ENCODE measurements at regions of chr2 and their contacts with region 1.

Region 1: DNA sequence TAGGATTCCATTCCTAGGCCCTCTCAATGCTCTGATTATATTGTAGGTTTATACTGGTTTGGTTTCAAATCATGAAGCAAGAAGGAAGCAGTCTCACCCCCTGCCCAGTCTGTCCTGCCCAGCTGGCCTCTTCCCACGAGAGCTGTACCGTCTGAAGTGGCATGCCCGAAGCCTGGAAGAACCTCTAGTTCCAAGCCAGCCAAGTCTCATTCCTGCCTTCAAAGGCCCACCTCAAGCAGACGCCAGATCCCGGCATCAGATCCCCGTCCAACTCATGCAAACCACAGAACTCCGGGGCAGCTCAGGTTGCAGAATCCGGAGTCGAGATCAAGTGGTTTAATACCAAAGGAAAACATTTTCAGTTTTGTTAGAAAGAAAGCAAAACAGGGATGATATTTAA is 234.4 kb downstream of the LPIN1 start:
- DNase-seq: no peak
- H3K4me3 ChIP-seq: no peak overlapping the region
- H3K27ac ChIP-seq: no peak overlapping the region
- H3K4me1 ChIP-seq: peaks cover 0 to 7% of the 10 kb centered on the region in 2 experiments; a peak in 1 of 4 replicates
- H3K27me3 ChIP-seq: no peaks in the 10 kb centered on the region
- CTCF ChIP-seq: no peak
- EP300 ChIP-seq: no peak
- RAD21 ChIP-seq: no peak

Region 2: DNA sequence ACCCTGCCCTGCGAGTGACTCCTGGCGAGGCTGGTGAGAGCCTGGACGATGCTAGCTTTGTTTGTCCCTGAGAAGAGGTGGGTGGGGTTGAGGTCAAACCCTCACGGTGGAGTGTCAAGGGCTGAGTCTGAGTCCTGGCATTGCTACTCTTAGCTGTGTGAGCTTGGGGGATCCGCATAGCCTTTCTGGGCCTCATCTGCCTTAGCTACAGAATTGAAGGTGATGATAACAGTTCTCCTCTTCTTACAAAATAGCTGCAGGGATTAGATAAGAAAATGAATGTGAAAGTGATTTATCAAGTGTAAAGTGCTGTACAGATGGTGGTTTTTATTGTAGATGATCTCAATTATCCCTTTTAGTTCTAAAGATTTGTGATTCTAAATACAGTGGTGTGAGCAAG is 89.8 kb before region 1 on chr2:
- CTCF ChIA-PET with region 1: no interaction called
- POLR2A ChIA-PET with region 1: no interaction called
- DNase-seq: no peak
- H3K4me3 ChIP-seq: no peak overlapping the region
- H3K27ac ChIP-seq: no peak overlapping the region
- H3K4me1 ChIP-seq: peaks cover 0 to 3% of the 10 kb centered on the region in 2 experiments; a peak in 1 of 4 replicates
- H3K27me3 ChIP-seq: no peaks in the 10 kb centered on the region
- CTCF ChIP-seq: no peak
- EP300 ChIP-seq: no peak
- RAD21 ChIP-seq: no peak

Region 3: DNA sequence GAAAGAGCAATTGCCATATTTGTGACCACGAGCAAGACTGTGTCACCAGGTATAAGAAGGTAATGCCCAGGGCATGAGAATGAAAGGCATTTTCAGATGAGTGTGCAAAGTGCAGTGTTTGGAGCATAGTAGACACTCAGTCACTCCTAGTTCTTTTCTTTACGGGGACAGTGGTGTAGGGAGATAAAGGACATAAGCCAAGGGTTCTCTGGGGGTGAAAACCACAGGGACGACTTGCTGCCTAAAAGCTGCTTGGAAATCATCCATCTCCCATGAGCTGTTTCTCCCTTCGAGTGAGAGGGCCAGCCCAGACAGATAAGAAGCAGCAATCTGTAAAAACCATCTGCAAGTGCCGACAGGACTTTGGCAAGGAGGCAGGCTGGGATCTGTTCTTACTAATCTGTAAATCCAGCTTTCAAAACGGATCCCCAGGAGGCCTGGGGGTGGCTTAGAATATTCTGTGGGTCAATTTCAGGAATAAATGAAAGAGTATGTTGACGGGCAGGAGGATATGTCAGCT is 12.8 kb before region 1 on chr2:
- CTCF ChIA-PET with region 1: interaction called, 30 read pairs
- POLR2A ChIA-PET with region 1: no interaction called
- DNase-seq: peak; percentile 46
- H3K4me3 ChIP-seq: no peak overlapping the region
- H3K27ac ChIP-seq: 0 out of 4 replicates have a peak overlapping the region, but pooled peaks of 1 of the 2 experiments have one; percentile 19
- H3K4me1 ChIP-seq: peaks cover 0 to 12% of the 10 kb centered on the region in 2 experiments; a peak in 2 of 4 replicates
- H3K27me3 ChIP-seq: no peaks in the 10 kb centered on the region
- CTCF ChIP-seq: no peak
- EP300 ChIP-seq: peak; percentile 88 to 91
- RAD21 ChIP-seq: no peak; the same call in 1 of the 2 replicates

Measured in SK-N-SH (cell line).